SK-N-SH (cell line): ENCODE measurements at regions of chr2 and their contacts with region 1.

Region 1: GRCh38 chr2:48727565-48727964 is 28.0 kb downstream of the LHCGR start:
- DNase-seq: no peak
- H3K4me3 ChIP-seq: no peak overlapping the region
- H3K27ac ChIP-seq: no peak overlapping the region
- H3K4me1 ChIP-seq: no peaks in the 10 kb centered on the region; a peak in 1 of 4 replicates
- H3K27me3 ChIP-seq: no peaks in the 10 kb centered on the region; the same call in 1 of the 2 replicates
- CTCF ChIP-seq: peak; percentile 51
- EP300 ChIP-seq: no peak
- RAD21 ChIP-seq: peak; percentile 54

Region 2: GRCh38 chr2:48738806-48739205 is 11.2 kb after region 1 on chr2:
- CTCF ChIA-PET with region 1: interaction called, 10 read pairs
- POLR2A ChIA-PET with region 1: no interaction called
- DNase-seq: no peak
- H3K4me3 ChIP-seq: no peak overlapping the region
- H3K27ac ChIP-seq: no peak overlapping the region
- H3K4me1 ChIP-seq: no peaks in the 10 kb centered on the region; a peak in 1 of 4 replicates
- H3K27me3 ChIP-seq: no peaks in the 10 kb centered on the region
- CTCF ChIP-seq: no peak
- EP300 ChIP-seq: no peak
- RAD21 ChIP-seq: no peak